ENCODE measurements at regions of chr3 and their contacts with region 1.

Region 1: GRCh38 chr3:141192345-141192744 is 39.3 kb upstream of the PXYLP1 start:
- DNase-seq: peak; percentile 84 to 99
- H3K4me3 ChIP-seq: no peak overlapping the region
- H3K27ac ChIP-seq: no peak overlapping the region
- H3K4me1 ChIP-seq: no peaks in the 10 kb centered on the region
- H3K27me3 ChIP-seq: no peaks in the 10 kb centered on the region
- CTCF ChIP-seq: peak; percentile 98 to 99 (median 99)

Region 2: DNA sequence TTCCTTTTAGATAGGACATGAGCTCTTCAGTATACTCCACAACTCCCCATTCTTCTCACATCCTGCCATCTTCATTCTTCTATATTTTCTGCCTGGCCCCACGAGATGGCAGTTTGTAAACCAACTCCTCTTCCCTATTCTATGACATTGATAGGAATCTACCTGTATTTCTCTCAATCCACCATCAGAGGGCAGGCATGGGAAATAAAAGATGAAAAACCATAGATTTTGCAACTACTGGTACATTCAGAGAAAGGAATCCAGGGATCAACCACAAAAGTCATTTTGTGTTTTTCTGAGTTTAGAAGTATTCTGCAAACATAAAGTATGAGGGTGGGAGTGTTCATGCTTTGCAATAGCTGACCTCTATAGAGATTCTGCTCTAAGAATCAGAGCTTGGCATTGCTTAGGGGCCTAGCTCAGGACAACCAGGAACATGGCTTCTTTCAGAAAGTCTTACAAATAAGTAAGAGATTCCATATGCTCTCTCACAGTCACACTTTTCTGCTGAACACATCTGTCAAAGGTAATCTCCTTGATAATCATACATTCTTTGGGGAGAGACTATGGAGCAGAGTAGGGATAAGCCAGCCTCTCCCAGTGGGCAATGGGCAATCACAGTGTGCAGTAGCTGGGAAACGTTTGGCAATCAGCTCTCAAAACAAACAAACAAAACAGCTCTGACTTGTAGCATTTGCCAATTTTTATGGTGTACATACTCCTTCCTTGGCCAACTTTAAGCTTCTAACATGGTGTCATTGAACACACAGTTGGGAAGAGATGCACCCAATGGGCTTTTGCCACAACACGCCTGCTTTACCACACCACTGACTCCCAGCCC is 293.8 kb before region 1 on chr3:
- intact Hi-C with region 1: loop called (anchors 1 kb)
- DNase-seq: no peak
- H3K4me3 ChIP-seq: no peak overlapping the region
- H3K27ac ChIP-seq: no peak overlapping the region
- H3K4me1 ChIP-seq: no peaks in the 10 kb centered on the region
- H3K27me3 ChIP-seq: no peaks in the 10 kb centered on the region
- CTCF ChIP-seq: peak; percentile 26 to 52 (median 45)

Region 3: GRCh38 chr3:141000027-141000663 is 192.2 kb before region 1 on chr3:
- intact Hi-C with region 1: loop called (anchors 1 kb)
- DNase-seq: peak in 1 of 2 donors; percentile 71
- H3K4me3 ChIP-seq: no peak overlapping the region
- H3K27ac ChIP-seq: no peak overlapping the region
- H3K4me1 ChIP-seq: no peaks in the 10 kb centered on the region
- H3K27me3 ChIP-seq: no peaks in the 10 kb centered on the region
- CTCF ChIP-seq: peak; percentile 54 to 71 (median 66)

Region 4: DNA sequence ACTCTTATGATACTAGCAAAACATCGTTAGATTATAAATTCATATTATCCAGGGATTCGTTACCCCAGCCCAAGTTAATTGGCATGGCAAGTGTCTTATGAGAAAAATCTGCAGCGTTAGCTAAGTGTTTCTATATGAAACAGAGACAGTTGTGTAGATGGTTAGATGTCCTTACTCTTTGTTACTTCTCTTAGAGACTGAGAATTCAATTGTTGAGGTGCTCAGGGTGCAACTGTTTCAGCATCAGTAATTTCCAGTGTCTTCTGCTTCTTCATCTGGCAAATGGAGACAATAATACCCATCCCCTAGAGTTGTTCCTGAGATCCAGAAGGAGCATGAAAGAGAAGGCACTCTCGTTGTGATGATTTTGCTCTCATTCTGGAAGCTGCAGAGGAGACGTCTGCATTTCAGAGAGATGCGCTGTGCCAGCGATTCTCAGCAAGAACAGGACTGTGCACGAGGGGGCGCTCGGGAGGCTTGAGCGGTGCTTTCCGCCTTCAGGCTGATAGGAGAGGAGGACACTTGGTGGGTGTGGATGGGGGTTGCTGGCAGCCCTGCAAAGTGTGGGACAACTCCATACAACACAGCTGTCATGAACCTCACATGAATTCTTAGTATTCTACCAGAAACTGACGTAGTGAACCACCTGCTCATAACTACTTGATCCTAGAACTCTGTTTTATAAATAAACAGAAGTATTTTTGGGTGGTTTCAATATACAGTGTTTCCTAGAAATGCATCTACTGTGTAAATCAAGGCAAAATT is 180.9 kb before region 1 on chr3:
- intact Hi-C with region 1: loop called (anchors 1 kb)
- DNase-seq: peak in 1 of 2 donors; percentile 77
- H3K4me3 ChIP-seq: no peak overlapping the region
- H3K27ac ChIP-seq: no peak overlapping the region
- H3K4me1 ChIP-seq: no peaks in the 10 kb centered on the region
- H3K27me3 ChIP-seq: no peaks in the 10 kb centered on the region
- CTCF ChIP-seq: peak; percentile 56 to 83 (median 72)

Region 5: GRCh38 chr3:141050576-141051442 is 141.5 kb before region 1 on chr3 and contains the start of gene SPSB4:
- intact Hi-C with region 1: loop called (anchors 2 kb)
- DNase-seq: peak in 1 of 2 donors; percentile 74
- H3K4me3 ChIP-seq: peak within 1 kb of the TSS; percentile 63 to 85
- H3K27ac ChIP-seq: peak within 1 kb of the TSS in 1 of 2 donors; percentile 61
- H3K4me1 ChIP-seq: peaks cover 0 to 4% of the 10 kb centered on the region in 2 donors
- H3K27me3 ChIP-seq: no peaks in the 10 kb centered on the region
- CTCF ChIP-seq: peak in 2 of 3 experiments; percentile 28 to 57
- total RNA-seq, gene SPSB4: not detected

Region 6: DNA sequence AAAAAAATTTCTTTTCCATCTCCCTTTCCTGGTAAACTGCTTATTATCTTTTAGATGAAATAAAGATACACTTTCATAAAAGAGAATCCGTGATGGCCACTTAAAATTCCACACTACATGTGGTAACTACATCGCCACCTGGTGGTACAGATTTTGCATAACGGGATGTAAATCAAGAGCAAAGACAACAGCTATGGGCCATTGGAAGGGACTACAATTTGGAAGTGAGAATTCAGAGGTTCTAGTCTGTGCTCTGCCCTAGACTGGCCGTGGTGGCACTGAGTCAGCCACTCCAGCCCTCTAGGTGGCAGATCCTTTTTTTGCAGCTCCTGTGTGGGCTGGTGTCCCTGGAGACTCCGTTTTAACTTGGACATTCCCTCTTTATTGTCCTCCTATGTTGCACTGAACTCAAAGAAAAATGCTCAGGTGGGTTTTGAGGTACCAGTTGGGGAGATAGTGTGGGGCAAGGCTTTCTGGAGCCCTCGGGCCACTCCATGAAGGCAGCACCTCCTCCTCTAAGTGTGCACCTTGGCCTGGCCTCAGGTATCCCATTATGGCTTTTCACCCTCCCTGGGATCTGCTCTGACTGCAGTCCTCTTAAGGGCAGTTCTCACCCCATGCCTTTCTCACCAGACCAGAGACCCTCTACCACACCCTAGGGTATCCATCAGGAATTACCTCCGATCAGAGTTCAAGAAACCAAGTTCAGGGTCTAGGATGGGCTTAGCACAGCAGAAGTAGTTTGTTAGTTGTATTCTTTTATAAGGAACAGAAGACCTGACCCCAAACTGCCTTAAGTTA is 86.3 kb before region 1 on chr3:
- intact Hi-C with region 1: loop called (anchors 2 kb)
- DNase-seq: peak in 1 of 2 donors; percentile 87
- H3K4me3 ChIP-seq: no peak overlapping the region
- H3K27ac ChIP-seq: no peak overlapping the region
- H3K4me1 ChIP-seq: peaks cover 4 to 6% of the 10 kb centered on the region in 2 donors
- H3K27me3 ChIP-seq: no peaks in the 10 kb centered on the region
- CTCF ChIP-seq: peak; percentile 55 to 80 (median 66)

Region 7: DNA sequence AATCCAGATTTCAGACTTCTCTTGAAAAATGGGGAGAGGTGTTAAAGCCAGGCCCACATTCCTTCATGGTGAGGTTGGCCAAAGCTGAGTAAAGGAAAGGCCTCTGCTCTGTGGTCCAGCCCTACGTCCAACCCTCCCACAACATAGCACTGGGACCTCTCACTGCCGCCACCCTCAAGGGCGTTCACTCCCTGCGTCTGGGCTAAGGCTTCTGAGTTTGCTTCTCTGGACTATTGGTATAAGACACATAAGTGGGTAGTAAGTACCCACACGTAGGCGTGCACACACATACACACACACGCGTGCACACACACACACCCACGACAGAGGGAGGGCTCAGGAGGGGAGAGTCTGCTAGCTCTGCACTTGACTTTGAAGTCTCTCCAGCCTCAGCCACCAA is 40.9 kb before region 1 on chr3:
- intact Hi-C with region 1: no loop called
- DNase-seq: no peak
- H3K4me3 ChIP-seq: no peak overlapping the region
- H3K27ac ChIP-seq: no peak overlapping the region
- H3K4me1 ChIP-seq: no peaks in the 10 kb centered on the region
- H3K27me3 ChIP-seq: no peaks in the 10 kb centered on the region
- CTCF ChIP-seq: no peak